Activated naive CD8-positive, alpha-beta T cell treated with anti-CD3 and anti-CD28 coated beads, Interleukin-2, amount 10 ng/mL, durations not matched to agents 7 days and 5 days (primary cell): ENCODE measurements at regions of chr13 and their contacts with region 1.

Region 1: GRCh38 chr13:94549232-94550061 is 46.5 kb downstream of the TGDS start:
- DNase-seq: peak; percentile 92
- ATAC-seq: peak; percentile 94
- H3K4me3 Mint-ChIP-seq: peak overlapping the region; percentile 89
- H3K27ac Mint-ChIP-seq: peak overlapping the region; percentile 95
- H3K4me1 Mint-ChIP-seq: peaks cover 16% of the 10 kb centered on the region
- H3K27me3 Mint-ChIP-seq: peaks cover 8% of the 10 kb centered on the region

Region 2: DNA sequence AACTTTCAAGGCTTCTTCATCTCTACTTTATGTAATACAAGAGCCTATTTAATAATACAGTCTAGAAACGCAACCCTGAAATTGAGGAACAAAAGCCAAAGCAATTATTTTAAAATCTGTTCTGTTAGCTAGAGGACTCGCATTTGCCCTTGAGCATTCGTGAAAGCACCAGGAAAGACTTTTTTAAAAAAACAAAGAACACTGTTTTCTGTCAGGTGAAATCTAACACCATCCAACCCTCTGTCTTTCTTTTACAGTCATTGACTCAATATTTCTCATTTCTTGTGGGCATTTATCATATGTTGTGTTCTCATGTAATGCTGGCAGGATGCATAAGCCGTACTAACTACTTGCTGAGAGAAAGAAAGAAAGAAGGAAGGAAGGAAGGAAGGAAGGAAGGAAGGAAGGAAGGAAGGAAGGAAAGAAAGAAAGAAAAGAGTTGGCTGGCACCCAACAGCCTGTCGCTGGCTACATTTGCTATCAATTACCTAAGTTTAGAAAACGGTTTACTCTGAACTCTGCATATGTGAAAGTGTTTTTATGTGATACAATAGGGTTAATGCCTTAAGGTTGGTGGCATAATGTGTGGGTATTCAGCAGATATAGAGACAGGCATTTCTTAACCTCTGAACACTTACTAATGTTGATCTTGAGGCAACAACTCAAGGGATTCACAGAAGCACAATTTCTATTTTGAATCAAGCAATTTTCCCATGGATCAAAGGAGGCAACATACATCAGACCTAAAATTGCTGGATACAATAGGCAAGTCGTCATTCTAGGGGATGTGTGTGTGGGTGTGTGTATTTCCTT is 515.4 kb before region 1 on chr13:
- POLR2A ChIA-PET with region 1: no interaction called
- DNase-seq: no peak
- ATAC-seq: no peak
- H3K4me3 Mint-ChIP-seq: no peak overlapping the region
- H3K27ac Mint-ChIP-seq: no peak overlapping the region
- H3K4me1 Mint-ChIP-seq: no peaks in the 10 kb centered on the region
- H3K27me3 Mint-ChIP-seq: no peaks in the 10 kb centered on the region

Region 3: GRCh38 chr13:94351292-94351990 is 198.0 kb before region 1 on chr13:
- POLR2A ChIA-PET with region 1: no interaction called
- DNase-seq: no peak
- ATAC-seq: peak; percentile 14
- H3K4me3 Mint-ChIP-seq: no peak overlapping the region
- H3K27ac Mint-ChIP-seq: no peak overlapping the region
- H3K4me1 Mint-ChIP-seq: peaks cover 5% of the 10 kb centered on the region
- H3K27me3 Mint-ChIP-seq: peaks cover 3% of the 10 kb centered on the region

Region 4: GRCh38 chr13:94444784-94445183 is 104.7 kb before region 1 on chr13:
- POLR2A ChIA-PET with region 1: no interaction called
- DNase-seq: no peak
- ATAC-seq: no peak
- H3K4me3 Mint-ChIP-seq: no peak overlapping the region
- H3K27ac Mint-ChIP-seq: no peak overlapping the region
- H3K4me1 Mint-ChIP-seq: no peaks in the 10 kb centered on the region
- H3K27me3 Mint-ChIP-seq: no peaks in the 10 kb centered on the region

Region 5: DNA sequence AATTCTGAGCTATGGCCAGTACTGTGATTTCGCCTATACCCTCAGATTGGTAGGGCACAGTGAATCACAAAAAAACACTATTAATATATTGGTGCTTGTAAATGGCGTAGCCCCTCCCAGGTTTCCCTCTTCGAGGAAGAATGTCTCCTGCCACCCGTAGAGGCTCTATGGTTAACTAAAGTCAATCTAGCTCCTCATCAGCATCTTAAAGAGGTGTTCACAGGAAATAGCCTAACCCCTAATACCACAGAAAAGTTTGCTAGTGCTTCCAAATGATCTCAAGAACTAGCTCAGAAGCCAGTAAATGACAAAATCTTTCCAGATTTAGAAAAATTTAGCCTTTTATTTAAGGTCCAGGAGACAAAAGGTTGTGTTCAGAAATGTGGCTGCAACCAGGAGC is 13.7 kb before region 1 on chr13:
- POLR2A ChIA-PET with region 1: interaction called, 18 read pairs
- DNase-seq: no peak
- ATAC-seq: peak; percentile 86
- H3K4me3 Mint-ChIP-seq: peak overlapping the region; percentile 31
- H3K27ac Mint-ChIP-seq: peak overlapping the region; percentile 47
- H3K4me1 Mint-ChIP-seq: peaks cover 10% of the 10 kb centered on the region
- H3K27me3 Mint-ChIP-seq: no peaks in the 10 kb centered on the region

Region 6: GRCh38 chr13:94595950-94596574 is 46.6 kb after region 1 on chr13 and contains the start of gene TGDS:
- POLR2A ChIA-PET with region 1: interaction called, 43 read pairs
- DNase-seq: peak; percentile 91
- ATAC-seq: peak; percentile 96
- H3K4me3 Mint-ChIP-seq: peak within 1 kb of the TSS; percentile 91
- H3K27ac Mint-ChIP-seq: peak within 1 kb of the TSS; percentile 81
- H3K4me1 Mint-ChIP-seq: peaks cover 26% of the 10 kb centered on the region
- H3K27me3 Mint-ChIP-seq: no peaks in the 10 kb centered on the region
- total RNA-seq, gene TGDS: 18.3 to 19.6 TPM